Vagina (tissue), 2 donors: ENCODE measurements at regions of chr17 and their contacts with region 1.

Region 1: DNA sequence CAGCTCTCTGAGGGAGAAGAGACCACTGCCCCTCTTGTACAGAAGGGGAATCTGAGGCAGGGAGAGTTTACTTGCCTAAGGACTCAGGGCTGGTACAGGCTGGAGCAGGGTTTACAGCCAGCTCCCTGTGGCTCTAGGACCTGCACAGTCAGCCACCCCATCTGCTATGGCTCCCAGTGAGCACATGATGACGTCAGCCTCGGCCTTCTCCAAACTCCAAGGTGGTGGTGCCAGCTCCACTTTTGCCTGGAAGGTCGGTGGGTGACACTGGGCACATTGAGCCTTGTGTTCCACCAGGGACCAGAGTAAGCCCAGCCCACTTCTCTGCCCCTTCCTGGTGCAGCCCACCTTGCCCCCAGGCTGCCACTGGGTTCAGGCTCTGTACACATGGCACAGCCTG is 202.2 kb downstream of the ENGASE start:
- DNase-seq: no peak
- H3K4me3 ChIP-seq: no peak overlapping the region
- H3K27ac ChIP-seq: no peak overlapping the region
- H3K4me1 ChIP-seq: no peaks in the 10 kb centered on the region
- H3K27me3 ChIP-seq: no peaks in the 10 kb centered on the region
- CTCF ChIP-seq: no peak
- POLR2A ChIP-seq: no peak

Region 2: DNA sequence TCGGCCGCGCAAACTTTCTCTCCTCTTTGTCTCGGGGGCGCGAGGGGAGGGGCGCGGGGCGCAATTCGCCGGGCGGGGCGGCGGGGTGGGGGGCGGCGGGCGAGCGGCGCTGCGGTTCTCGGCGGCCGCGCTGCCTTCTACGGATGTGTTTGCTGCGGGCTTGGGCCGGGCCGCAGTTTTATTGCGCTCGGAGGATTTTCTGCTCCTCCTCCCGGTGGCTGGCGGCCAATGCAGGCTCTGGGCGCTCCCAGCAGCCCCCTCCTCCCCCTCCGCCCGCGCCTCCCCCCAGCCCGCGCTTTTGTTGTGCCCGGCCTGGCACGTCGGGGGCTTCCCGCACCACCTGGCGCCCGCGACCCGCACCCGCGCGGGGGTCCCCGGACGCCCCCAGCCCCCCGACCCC is 351.6 kb before region 1 on chr17 and contains the start of gene TIMP2:
- intact Hi-C with region 1: no loop called
- DNase-seq: no peak
- H3K4me3 ChIP-seq: peak within 1 kb of the TSS; percentile 66 to 81
- H3K27ac ChIP-seq: peak within 1 kb of the TSS; percentile 99
- H3K4me1 ChIP-seq: peaks cover 57% of the 10 kb centered on the region
- H3K27me3 ChIP-seq: no peaks in the 10 kb centered on the region
- CTCF ChIP-seq: no peak
- POLR2A ChIP-seq: peak in 1 of 2 donors; percentile 55
- total RNA-seq, gene TIMP2: 181 TPM

Region 3: DNA sequence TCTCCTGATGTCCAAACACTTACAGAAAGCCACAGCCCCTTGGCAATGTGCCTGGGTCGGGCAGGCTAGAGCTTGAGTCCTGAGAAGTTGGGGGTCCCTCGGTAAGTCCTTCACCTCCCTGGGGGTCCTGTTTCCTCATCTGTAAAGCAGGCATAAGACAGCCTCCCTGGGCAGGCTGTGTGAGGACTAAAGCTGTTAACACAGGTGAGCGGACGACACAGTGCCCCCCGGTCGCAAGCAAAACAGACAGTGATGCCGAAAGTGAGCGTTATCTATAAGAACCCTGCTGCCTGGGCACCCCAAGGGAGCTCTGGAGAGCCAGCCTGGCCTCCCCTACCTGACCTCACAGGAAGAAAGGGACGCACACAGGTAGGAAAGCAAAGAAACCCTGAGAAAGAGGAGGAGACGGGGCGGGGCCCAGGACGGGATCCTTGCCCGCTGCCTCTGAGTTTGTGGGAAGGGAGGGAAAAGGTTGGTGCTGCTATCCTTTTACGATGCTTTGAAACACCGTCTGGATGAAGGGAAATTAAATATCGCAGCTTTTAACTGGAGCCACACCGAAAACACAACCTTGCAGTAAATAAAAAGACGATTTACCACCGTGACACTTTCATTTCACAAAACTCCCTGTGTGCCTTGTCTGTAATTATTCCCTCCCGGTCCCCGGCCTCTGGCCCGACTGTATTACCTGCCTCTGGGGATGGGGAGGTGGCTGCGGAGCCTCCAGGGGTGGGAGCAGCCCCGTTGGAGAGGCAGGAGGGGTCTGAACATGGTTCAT is 135.1 kb before region 1 on chr17:
- intact Hi-C with region 1: loop called (anchors 5 kb)
- DNase-seq: no peak
- H3K4me3 ChIP-seq: no peak overlapping the region
- H3K27ac ChIP-seq: no peak overlapping the region
- H3K4me1 ChIP-seq: no peaks in the 10 kb centered on the region
- H3K27me3 ChIP-seq: no peaks in the 10 kb centered on the region
- CTCF ChIP-seq: no peak
- POLR2A ChIP-seq: no peak

Region 4: DNA sequence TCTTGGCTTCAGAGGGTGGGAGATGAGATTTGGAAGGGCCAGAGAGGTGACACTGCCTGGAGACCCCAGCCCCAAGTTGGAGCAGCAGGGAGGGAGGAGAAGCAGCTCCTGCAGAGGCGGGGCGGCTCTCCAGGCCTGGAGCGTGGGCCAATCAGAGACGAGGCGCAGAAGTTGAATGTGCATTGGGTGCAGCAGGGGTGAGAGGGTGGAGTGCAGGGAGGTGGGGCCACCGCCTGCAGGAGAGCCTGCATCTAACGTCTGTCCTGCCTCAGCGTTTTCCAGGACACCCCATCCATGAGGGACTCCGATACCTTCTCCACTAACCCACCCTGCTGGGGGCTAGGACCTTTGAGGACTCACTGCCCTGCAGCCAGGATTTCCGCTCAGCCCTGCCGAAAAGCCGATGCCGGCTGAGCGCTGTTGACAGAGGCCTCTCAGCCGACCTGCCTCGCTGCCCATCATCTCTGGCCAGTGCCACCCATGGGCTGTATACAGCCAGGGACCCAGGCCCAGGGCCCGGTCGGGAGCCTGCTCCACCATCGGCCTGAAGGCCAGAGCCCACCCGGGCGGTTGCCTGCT is 56.0 kb before region 1 on chr17:
- intact Hi-C with region 1: no loop called
- DNase-seq: no peak
- H3K4me3 ChIP-seq: no peak overlapping the region
- H3K27ac ChIP-seq: no peak overlapping the region
- H3K4me1 ChIP-seq: peaks cover 5% of the 10 kb centered on the region
- H3K27me3 ChIP-seq: no peaks in the 10 kb centered on the region
- CTCF ChIP-seq: no peak
- POLR2A ChIP-seq: no peak

Region 5: DNA sequence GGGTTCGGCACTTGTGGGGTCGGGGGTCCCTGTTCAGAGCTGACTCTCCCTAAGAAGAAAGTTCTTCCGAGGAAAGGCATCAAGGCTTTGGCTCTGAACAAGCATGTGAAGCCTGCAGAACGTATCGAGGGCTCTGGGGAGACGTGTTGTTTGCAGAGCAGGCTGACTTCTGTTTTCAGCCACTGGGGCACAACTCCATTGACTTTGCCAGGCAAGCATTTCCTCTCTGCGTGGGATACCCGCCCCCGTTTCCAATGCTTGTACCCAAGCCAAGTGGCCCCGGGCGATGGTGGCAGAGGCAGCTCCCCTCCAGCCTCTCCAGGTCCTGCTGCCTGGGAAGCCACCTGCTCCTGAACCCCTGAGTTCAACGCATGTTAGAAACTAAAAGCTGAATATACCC is 78.3 kb after region 1 on chr17:
- intact Hi-C with region 1: no loop called
- DNase-seq: no peak
- H3K4me3 ChIP-seq: no peak overlapping the region
- H3K27ac ChIP-seq: no peak overlapping the region
- H3K4me1 ChIP-seq: no peaks in the 10 kb centered on the region
- H3K27me3 ChIP-seq: peaks cover 3% of the 10 kb centered on the region
- CTCF ChIP-seq: no peak
- POLR2A ChIP-seq: no peak